Ascending aorta (tissue), 2 donors: ENCODE measurements at regions of chr1 and their contacts with region 1.

Region 1: GRCh38 chr1:109687616-109688499 is at the start of gene GSTM1:
- DNase-seq: peak in 1 of 2 donors; percentile 89
- H3K4me3 ChIP-seq: peak within 1 kb of the TSS in 1 of 2 donors; percentile 38
- H3K27ac ChIP-seq: peak within 1 kb of the TSS in 1 of 2 donors; percentile 46
- H3K4me1 ChIP-seq: no peaks in the 10 kb centered on the region
- H3K27me3 ChIP-seq: no peaks in the 10 kb centered on the region
- CTCF ChIP-seq: peak in 1 of 3 experiments; percentile 41
- total RNA-seq, gene GSTM1: 89.4 TPM

Region 2: DNA sequence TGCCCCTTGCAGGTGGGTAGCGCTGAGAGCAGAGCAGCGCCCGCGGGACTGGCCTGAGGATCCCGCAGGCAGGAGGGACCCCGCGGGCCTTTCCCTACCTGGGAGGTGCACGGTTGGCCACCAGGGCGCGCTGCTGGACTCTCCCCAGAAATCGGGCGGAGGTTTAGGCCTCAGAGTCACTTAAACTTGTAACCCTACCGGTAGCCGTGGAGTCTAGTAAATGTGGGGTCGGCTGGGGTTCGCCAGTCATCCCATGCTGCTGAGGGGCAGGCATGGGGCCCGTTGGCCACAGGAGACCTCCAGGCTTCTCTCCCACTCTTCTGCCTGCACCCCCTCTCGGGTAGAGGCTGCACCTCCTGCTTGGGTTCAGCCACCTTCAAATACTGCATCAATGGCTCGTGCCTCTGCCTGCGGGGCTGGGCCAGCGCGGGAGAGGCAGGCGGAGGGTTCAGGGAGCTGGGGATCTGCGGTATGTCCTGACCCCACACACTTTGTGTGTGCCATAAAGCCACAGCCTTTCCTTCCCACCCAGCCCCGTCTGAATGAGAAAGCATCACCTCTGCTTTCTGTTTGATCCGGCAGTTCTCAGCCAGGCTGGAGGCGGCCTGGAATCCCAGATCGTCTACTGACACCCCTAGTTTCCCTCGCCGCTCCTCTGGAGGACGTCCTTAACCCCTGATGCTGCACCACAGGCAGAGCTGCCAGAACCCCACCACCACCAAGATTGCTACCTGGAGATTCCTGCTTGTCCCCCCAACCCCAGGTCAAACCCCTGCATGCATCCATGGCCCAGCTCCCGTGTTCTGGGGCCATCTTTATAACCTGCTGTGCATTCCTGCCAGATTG is 44.2 kb before region 1 on chr1:
- intact Hi-C with region 1: loop called (anchors 5 kb)
- DNase-seq: peak in 1 of 2 donors; percentile 90
- H3K4me3 ChIP-seq: no peak overlapping the region
- H3K27ac ChIP-seq: no peak overlapping the region
- H3K4me1 ChIP-seq: no peaks in the 10 kb centered on the region
- H3K27me3 ChIP-seq: no peaks in the 10 kb centered on the region
- CTCF ChIP-seq: peak; percentile 81 to 87 (median 81)

Region 3: GRCh38 chr1:110118636-110119615 is 431.1 kb after region 1 on chr1:
- intact Hi-C with region 1: no loop called
- DNase-seq: no peak
- H3K4me3 ChIP-seq: no peak overlapping the region
- H3K27ac ChIP-seq: no peak overlapping the region
- H3K4me1 ChIP-seq: no peaks in the 10 kb centered on the region
- H3K27me3 ChIP-seq: no peaks in the 10 kb centered on the region
- CTCF ChIP-seq: no peak